Activated CD8-positive, alpha-beta T cell treated with anti-CD3 and anti-CD28 coated beads for 36 hours (primary cell): ENCODE measurements at regions of chr3 and their contacts with region 1.

Region 1: GRCh38 chr3:40317061-40317855 is 7.8 kb downstream of the EIF1B start:
- DNase-seq: peak; percentile 66
- ATAC-seq: peak; percentile 88
- H3K4me3 Mint-ChIP-seq: no peak overlapping the region
- H3K27ac Mint-ChIP-seq: no peak overlapping the region
- H3K4me1 Mint-ChIP-seq: peaks cover 6% of the 10 kb centered on the region
- H3K27me3 Mint-ChIP-seq: no peaks in the 10 kb centered on the region
- CTCF ChIP-seq: peak; percentile 89

Region 2: DNA sequence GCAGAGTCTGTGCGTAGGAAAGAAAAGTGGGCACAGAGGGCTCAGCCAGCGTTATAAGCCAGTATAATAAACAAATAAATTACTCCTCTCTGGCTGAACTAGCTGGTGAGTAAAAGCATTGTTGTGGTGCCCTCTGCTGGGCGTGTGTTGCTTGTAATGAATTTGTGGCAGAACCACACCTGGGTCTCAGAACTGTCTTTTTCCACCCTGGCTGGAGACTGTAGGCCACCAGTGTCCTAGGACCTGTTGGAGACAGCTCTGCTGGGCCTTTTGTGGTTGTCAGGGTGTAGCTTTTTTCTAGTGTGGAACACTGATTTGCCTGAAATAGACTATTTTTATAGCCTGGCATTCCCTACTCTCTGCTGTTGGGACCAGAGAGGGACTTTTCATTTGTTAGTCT is 138.2 kb before region 1 on chr3:
- CTCF ChIA-PET with region 1: interaction called, 14 read pairs
- POLR2A ChIA-PET with region 1: no interaction called
- intact Hi-C with region 1: no loop called
- DNase-seq: peak; percentile 83
- ATAC-seq: peak; percentile 61
- H3K4me3 Mint-ChIP-seq: no peak overlapping the region
- H3K27ac Mint-ChIP-seq: no peak overlapping the region
- H3K4me1 Mint-ChIP-seq: no peaks in the 10 kb centered on the region
- H3K27me3 Mint-ChIP-seq: no peaks in the 10 kb centered on the region
- CTCF ChIP-seq: peak; percentile 67

Region 3: GRCh38 chr3:40191850-40192448 is 125.3 kb before region 1 on chr3:
- CTCF ChIA-PET with region 1: interaction called, 143 read pairs
- POLR2A ChIA-PET with region 1: no interaction called
- intact Hi-C with region 1: loop called (anchors 1 kb)
- DNase-seq: peak; percentile 73
- ATAC-seq: peak; percentile 92
- H3K4me3 Mint-ChIP-seq: no peak overlapping the region
- H3K27ac Mint-ChIP-seq: no peak overlapping the region
- H3K4me1 Mint-ChIP-seq: no peaks in the 10 kb centered on the region
- H3K27me3 Mint-ChIP-seq: no peaks in the 10 kb centered on the region
- CTCF ChIP-seq: peak; percentile 95

Region 4: GRCh38 chr3:40201770-40202169 is 115.5 kb before region 1 on chr3:
- CTCF ChIA-PET with region 1: interaction called, 15 read pairs
- POLR2A ChIA-PET with region 1: no interaction called
- intact Hi-C with region 1: no loop called
- DNase-seq: no peak
- ATAC-seq: no peak
- H3K4me3 Mint-ChIP-seq: no peak overlapping the region
- H3K27ac Mint-ChIP-seq: no peak overlapping the region
- H3K4me1 Mint-ChIP-seq: no peaks in the 10 kb centered on the region
- H3K27me3 Mint-ChIP-seq: no peaks in the 10 kb centered on the region
- CTCF ChIP-seq: no peak

Region 5: DNA sequence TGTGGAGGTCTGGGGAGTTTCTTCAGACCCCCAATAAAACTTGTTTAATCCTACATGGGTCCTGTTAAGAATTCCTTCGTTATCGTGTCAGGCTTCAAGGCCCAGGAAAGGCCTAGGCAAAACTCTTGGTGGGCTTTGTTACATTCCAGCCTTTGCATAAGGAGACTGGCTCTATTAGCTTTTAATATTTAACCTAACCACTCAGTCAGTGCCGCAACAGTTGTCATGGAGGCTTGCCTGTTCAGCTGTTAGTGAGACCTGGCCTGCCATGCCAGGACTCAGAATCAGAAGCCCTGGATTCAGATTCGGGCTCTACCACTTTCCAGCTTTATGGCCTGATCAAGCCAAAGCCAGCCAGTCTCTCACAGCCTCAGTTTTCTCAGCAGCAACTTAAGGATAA is 11.8 kb after region 1 on chr3:
- CTCF ChIA-PET with region 1: interaction called, 18 read pairs
- POLR2A ChIA-PET with region 1: no interaction called
- intact Hi-C with region 1: no loop called
- DNase-seq: no peak
- ATAC-seq: no peak
- H3K4me3 Mint-ChIP-seq: no peak overlapping the region
- H3K27ac Mint-ChIP-seq: no peak overlapping the region
- H3K4me1 Mint-ChIP-seq: peaks cover 3% of the 10 kb centered on the region
- H3K27me3 Mint-ChIP-seq: no peaks in the 10 kb centered on the region
- CTCF ChIP-seq: no peak

Region 6: GRCh38 chr3:40800343-40800742 is 483.1 kb after region 1 on chr3:
- CTCF ChIA-PET with region 1: no interaction called
- POLR2A ChIA-PET with region 1: no interaction called
- intact Hi-C with region 1: no loop called
- DNase-seq: no peak
- ATAC-seq: no peak
- H3K4me3 Mint-ChIP-seq: no peak overlapping the region
- H3K27ac Mint-ChIP-seq: no peak overlapping the region
- H3K4me1 Mint-ChIP-seq: no peaks in the 10 kb centered on the region
- H3K27me3 Mint-ChIP-seq: peaks cover 12% of the 10 kb centered on the region
- CTCF ChIP-seq: no peak

Region 7: GRCh38 chr3:41026394-41027177 is 709.3 kb after region 1 on chr3:
- CTCF ChIA-PET with region 1: no interaction called
- POLR2A ChIA-PET with region 1: no interaction called
- intact Hi-C with region 1: no loop called
- DNase-seq: no peak
- ATAC-seq: no peak
- H3K4me3 Mint-ChIP-seq: no peak overlapping the region
- H3K27ac Mint-ChIP-seq: no peak overlapping the region
- H3K4me1 Mint-ChIP-seq: no peaks in the 10 kb centered on the region
- H3K27me3 Mint-ChIP-seq: peaks cover 2% of the 10 kb centered on the region
- CTCF ChIP-seq: no peak